Esophagus muscularis mucosa (tissue), 4 donors: ENCODE measurements at regions of chr7 and their contacts with region 1.

Region 1: GRCh38 chr7:30412810-30413504 is 65.6 kb downstream of the NOD1 start:
- DNase-seq: peak; percentile 91
- H3K4me3 ChIP-seq: no peak overlapping the region
- H3K27ac ChIP-seq: no peak overlapping the region
- H3K4me1 ChIP-seq: peaks cover 0 to 19% (median 8%) of the 10 kb centered on the region in 4 donors
- H3K27me3 ChIP-seq: no peaks in the 10 kb centered on the region
- CTCF ChIP-seq: peak; percentile 63 to 83 (median 66)
- EP300 ChIP-seq: no peak
- POLR2A ChIP-seq: no peak

Region 2: DNA sequence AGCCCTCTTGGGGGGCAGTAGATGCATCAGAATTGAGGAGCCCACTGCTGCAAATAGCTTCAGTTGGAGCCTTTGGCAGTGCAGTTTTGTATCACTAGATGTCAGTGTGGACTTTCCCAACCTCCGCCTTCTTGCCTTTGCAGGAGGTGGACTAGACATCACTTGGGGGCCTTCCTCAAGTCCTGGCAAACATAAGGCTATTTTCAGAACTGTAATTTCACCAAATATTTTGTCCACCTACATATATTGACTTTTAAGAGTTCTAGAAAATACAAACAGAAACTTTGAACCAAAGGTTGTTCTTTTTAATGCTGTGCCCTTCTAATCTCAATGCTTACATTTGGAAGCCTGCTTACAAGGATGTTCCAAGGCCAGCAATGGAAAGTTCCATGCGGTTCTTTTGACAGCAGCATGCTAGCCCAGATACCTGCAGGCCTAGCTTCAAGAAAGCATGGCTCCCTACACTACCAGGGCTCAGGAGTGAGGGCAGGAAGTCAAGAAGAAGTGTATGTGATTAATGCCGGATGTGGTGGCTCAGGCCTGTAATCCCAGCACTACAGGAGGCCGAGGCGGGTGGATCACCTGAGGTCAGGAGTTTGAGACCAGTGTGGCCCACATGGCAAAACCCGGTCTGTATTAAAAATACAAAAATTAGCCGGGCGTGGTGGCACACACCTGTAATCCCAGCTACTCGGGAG is 136.6 kb before region 1 on chr7:
- intact Hi-C with region 1: loop called (anchors 5 kb)
- DNase-seq: no peak
- H3K4me3 ChIP-seq: no peak overlapping the region
- H3K27ac ChIP-seq: no peak overlapping the region
- H3K4me1 ChIP-seq: peaks cover 0 to 12% (median 6%) of the 10 kb centered on the region in 4 donors
- H3K27me3 ChIP-seq: no peaks in the 10 kb centered on the region
- CTCF ChIP-seq: peak; percentile 58 to 76 (median 64)
- EP300 ChIP-seq: no peak
- POLR2A ChIP-seq: no peak